ENCODE measurements at regions of chr11 and their contacts with region 1.

Region 1: DNA sequence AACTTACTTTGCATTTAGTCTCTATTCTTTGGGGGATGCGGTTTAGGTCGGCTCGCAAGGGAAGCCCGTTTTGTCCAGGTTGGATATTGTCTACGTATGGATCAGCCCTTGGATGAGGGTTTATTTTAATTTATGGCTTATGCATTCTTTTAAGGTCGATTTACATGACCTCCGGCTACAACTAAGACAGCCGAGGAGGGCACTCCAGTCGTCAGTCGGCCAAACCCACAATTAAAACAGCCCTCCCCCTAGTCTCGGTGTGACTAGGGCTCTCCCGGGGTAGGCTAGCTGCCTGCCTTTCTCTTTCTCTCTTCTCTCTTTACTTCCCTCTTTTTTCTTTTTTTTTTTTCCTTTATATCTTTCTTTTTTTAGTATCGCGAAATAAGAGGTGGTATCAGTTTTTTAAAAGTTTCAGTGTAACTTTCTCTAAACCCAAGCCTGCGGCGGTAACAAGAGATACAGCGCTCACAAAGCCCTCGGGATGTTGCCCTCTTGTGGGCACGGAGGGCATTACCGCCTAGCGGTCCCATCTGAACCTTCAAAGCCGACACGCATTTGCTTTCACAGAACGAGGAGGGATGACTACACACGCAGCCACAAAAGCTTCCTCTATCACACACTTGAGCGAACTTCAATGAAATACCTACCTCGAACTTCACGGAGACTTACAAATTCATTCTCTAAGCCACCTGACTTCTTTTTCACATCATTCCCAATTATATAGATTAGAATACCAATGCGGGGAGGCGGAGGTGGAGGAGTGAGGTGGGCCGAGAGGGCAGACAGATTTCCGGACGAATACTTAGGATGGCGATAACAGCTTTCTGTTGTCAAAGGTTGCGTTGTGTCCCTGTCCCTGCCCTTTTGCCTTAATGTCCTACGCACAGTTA is 132.3 kb upstream of the C11orf58 start:
- DNase-seq: peak; percentile 69 to 92 (median 88)
- H3K4me3 ChIP-seq: peak overlapping the region; percentile 22 to 72 (median 57)
- H3K27ac ChIP-seq: peak overlapping the region in 56 of 59 donors; percentile 29 to 94 (median 80)
- H3K27me3 ChIP-seq: peaks cover 4 to 100% (median 90%) of the 10 kb centered on the region in 45 donors
- CTCF ChIP-seq: peak; percentile 84 to 98 (median 95)

Region 2: GRCh38 chr11:15327786-15328231 is 1278.3 kb before region 1 on chr11:
- intact Hi-C with region 1: loop called (anchors 5 to 10 kb)
- DNase-seq: peak; percentile 26 to 75 (median 60)
- H3K4me3 ChIP-seq: no peak overlapping the region
- H3K27ac ChIP-seq: no peak overlapping the region
- H3K27me3 ChIP-seq: peaks cover 0 to 22% (median 0%) of the 10 kb centered on the region in 45 donors
- CTCF ChIP-seq: peak; percentile 17 to 69 (median 56)

Region 3: GRCh38 chr11:15941201-15941770 is 664.9 kb before region 1 on chr11:
- intact Hi-C with region 1: loop called in 1 of 2 experiments (anchors 10 kb)
- DNase-seq: no peak
- H3K4me3 ChIP-seq: no peak overlapping the region
- H3K27ac ChIP-seq: no peak overlapping the region
- H3K27me3 ChIP-seq: peaks cover 0 to 23% (median 0%) of the 10 kb centered on the region in 45 donors
- CTCF ChIP-seq: peak in 55 of 56 donors; percentile 41 to 77 (median 65)

Region 4: GRCh38 chr11:16111690-16112089 is 494.4 kb before region 1 on chr11:
- intact Hi-C with region 1: loop called in 1 of 2 experiments (anchors 10 kb)
- DNase-seq: no peak
- H3K4me3 ChIP-seq: peak overlapping the region in 40 of 59 donors; percentile 0 to 49 (median 22)
- H3K27ac ChIP-seq: peak overlapping the region in 3 of 59 donors; percentile 9 to 36 (median 11)
- H3K27me3 ChIP-seq: peaks cover 0 to 50% (median 0%) of the 10 kb centered on the region in 45 donors
- CTCF ChIP-seq: no peak

Region 5: DNA sequence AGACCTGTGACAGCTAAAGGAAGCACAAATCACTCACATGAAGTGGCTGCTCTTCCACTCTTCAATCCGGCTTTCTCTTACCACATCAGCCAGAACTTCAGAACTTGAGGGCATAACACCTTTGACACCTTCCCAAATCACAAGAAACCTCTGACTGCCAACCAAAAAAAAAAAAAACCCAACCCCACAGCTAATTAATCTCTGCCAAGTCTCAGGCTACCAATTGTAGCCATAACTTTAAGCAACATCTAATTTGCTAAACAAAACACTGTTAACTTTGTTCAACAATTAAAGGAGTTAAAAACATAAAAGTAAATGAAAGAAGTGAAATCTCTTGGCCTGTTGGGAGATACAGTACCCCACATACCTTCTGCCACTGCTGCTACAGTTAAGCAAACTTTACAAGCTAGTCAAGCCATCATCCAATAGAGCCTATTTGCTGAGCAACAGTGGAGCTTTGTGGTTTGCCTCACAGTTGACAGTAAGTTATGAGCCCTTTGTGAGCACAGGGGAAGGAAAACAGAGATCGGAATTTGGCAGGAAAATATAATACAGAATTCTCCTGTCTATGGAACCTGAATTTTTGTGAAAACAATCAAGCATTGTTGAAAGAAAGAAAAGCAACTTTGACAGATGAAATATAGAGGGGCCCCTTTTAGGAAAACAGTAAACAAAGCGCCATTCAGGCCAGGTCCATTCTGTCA is 249.9 kb before region 1 on chr11 and contains the start of gene SOX6:
- intact Hi-C with region 1: loop called (anchors 2 to 10 kb)
- DNase-seq: peak in 2 of 10 donors; percentile 5 to 16
- H3K4me3 ChIP-seq: peak within 1 kb of the TSS in 22 of 59 donors; percentile 0 to 44 (median 8)
- H3K27ac ChIP-seq: peak within 1 kb of the TSS in 55 of 59 donors; percentile 4 to 82 (median 65)
- H3K27me3 ChIP-seq: peaks cover 0 to 5% (median 0%) of the 10 kb centered on the region in 45 donors
- CTCF ChIP-seq: peak in 4 of 56 donors; percentile 13 to 27 (median 18)
- total RNA-seq, gene SOX6: 19.1 to 75.9 (median 33.1) TPM

Region 6: GRCh38 chr11:16402654-16403447 is 203.3 kb before region 1 on chr11:
- intact Hi-C with region 1: loop called in 1 of 2 experiments (anchors 5 kb)
- DNase-seq: peak in 3 of 10 donors; percentile 7 to 41 (median 30)
- H3K4me3 ChIP-seq: peak overlapping the region in 21 of 59 donors; percentile 0 to 50 (median 13)
- H3K27ac ChIP-seq: peak overlapping the region in 44 of 59 donors; percentile 4 to 85 (median 52)
- H3K27me3 ChIP-seq: peaks cover 0 to 15% (median 0%) of the 10 kb centered on the region in 45 donors
- CTCF ChIP-seq: peak in 5 of 56 donors; percentile 11 to 34 (median 19)

Region 7: DNA sequence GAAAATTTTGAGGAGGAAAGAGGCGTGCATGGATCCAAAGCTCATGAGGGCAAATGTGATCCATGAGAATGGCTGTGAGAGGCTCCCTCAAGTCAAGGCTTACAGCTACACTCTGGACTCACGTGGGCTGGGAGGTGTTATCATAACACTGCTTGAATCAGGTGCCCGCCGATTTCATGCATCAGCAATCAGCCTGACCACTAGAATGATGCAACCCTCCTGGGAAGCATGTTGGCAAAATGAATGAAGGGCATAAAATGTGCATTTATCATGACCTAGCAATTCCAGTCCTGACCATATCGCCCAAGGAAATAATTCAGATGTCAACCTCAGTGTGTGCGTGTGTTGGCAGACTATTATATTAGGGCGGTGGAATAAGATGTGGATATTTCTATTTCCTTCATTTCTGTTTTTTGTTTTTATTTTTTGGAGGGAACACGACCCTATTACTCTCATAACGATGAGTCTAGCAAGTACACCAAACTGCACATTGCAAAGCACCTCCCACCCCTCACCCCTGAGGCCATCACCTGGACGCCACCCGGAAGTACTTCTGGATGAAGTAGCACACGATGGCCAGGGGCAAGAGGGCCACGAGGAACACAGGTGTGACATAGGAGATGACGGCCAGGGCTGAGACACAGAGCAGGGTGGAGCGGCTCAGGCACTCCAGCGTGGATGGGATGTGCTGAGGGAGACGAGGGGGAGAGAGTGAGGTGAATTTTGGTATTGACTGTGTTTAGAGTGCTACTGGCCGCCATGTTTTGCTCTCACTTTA is 798.0 kb after region 1 on chr11:
- intact Hi-C with region 1: no loop called
- DNase-seq: no peak
- H3K4me3 ChIP-seq: no peak overlapping the region
- H3K27ac ChIP-seq: peak overlapping the region in 1 of 59 donors; percentile 45
- H3K27me3 ChIP-seq: no peaks in the 10 kb centered on the region
- CTCF ChIP-seq: no peak